IMR-90 (cell line): ENCODE measurements at regions of chr10 and their contacts with region 1.

Region 1: DNA sequence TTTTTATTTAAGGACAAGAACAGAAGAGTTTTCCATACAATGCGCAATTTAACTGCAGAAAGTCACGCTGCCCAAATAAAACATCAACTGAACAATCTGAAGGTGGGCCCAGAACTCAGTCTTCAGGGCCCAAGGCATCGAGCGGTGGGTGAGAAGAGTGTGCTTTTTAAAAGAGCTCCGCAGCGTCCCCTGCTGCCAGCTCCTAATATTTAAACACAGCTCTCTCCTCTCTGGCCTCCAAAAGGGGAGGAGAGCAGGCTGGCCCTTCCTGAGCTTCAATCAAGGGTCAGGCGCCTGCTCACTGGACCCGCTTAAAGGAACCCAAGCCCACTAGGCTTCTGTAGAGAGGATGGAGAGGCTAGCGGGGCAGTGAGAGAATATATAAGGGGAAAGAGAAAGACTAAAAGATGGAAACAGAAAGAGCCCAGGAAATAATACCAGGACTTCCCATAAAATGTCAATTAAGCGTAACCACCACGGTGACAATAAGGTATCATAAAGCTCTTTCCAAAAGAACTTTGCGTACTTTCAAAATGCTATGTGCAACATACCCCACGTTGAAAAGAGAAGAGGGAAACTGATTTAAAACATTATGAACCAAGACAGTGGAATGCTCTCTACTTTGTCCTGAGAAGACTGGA is 2.8 kb downstream of the FAM53B start:
- DNase-seq: peak; percentile 64
- ATAC-seq: peak; percentile 28
- H3K4me3 ChIP-seq: no peak overlapping the region
- H3K27ac ChIP-seq: no peak overlapping the region
- H3K4me1 ChIP-seq: peaks cover 18% of the 10 kb centered on the region
- H3K27me3 ChIP-seq: no peaks in the 10 kb centered on the region
- CTCF ChIP-seq: peak; percentile 82
- POLR2A ChIP-seq: no peak
- RAD21 ChIP-seq: peak; percentile 76

Region 2: GRCh38 chr10:124418726-124419501 is 322.5 kb before region 1 on chr10 and contains the start of gene OAT:
- CTCF ChIA-PET with region 1: no interaction called
- POLR2A ChIA-PET with region 1: no interaction called
- dilution Hi-C with region 1: no loop called
- in situ Hi-C with region 1: no loop called
- intact Hi-C with region 1: loop called (anchors 1 kb)
- DNase-seq: peak; percentile 92
- ATAC-seq: peak; percentile 96
- H3K4me3 ChIP-seq: peak within 1 kb of the TSS; percentile 67
- H3K27ac ChIP-seq: peak within 1 kb of the TSS; percentile 63
- H3K4me1 ChIP-seq: no peaks in the 10 kb centered on the region
- H3K27me3 ChIP-seq: peaks cover 10% of the 10 kb centered on the region; the same call in 1 of the 2 replicates
- CTCF ChIP-seq: 0 out of 2 replicates have a peak, but pooled peaks have one; percentile 1
- POLR2A ChIP-seq: peak; percentile 99
- RAD21 ChIP-seq: no peak
- total RNA-seq, gene OAT: 152 and 190 TPM in 2 replicates

Region 3: GRCh38 chr10:124539935-124540641 is 201.3 kb before region 1 on chr10:
- CTCF ChIA-PET with region 1: interaction called, 9 read pairs
- POLR2A ChIA-PET with region 1: no interaction called
- dilution Hi-C with region 1: no loop called
- in situ Hi-C with region 1: loop called (anchors 5 kb)
- intact Hi-C with region 1: loop called (anchors 1 kb)
- DNase-seq: peak; percentile 18
- ATAC-seq: peak; percentile 91
- H3K4me3 ChIP-seq: no peak overlapping the region
- H3K27ac ChIP-seq: no peak overlapping the region
- H3K4me1 ChIP-seq: no peaks in the 10 kb centered on the region
- H3K27me3 ChIP-seq: no peaks in the 10 kb centered on the region; the same call in 1 of the 2 replicates
- CTCF ChIP-seq: peak; percentile 57
- POLR2A ChIP-seq: no peak
- RAD21 ChIP-seq: peak; percentile 78

Region 4: GRCh38 chr10:124562425-124563060 is 178.9 kb before region 1 on chr10:
- CTCF ChIA-PET with region 1: no interaction called
- POLR2A ChIA-PET with region 1: no interaction called
- dilution Hi-C with region 1: no loop called
- in situ Hi-C with region 1: no loop called
- intact Hi-C with region 1: no loop called
- DNase-seq: no peak
- ATAC-seq: no peak
- H3K4me3 ChIP-seq: no peak overlapping the region
- H3K27ac ChIP-seq: no peak overlapping the region
- H3K4me1 ChIP-seq: no peaks in the 10 kb centered on the region
- H3K27me3 ChIP-seq: peaks cover 14% of the 10 kb centered on the region
- CTCF ChIP-seq: no peak
- POLR2A ChIP-seq: no peak
- RAD21 ChIP-seq: no peak

Region 5: GRCh38 chr10:124588736-124589490 is 152.5 kb before region 1 on chr10:
- CTCF ChIA-PET with region 1: no interaction called
- POLR2A ChIA-PET with region 1: no interaction called
- dilution Hi-C with region 1: no loop called
- in situ Hi-C with region 1: no loop called
- intact Hi-C with region 1: no loop called
- DNase-seq: peak; percentile 28
- ATAC-seq: peak; percentile 44
- H3K4me3 ChIP-seq: no peak overlapping the region
- H3K27ac ChIP-seq: no peak overlapping the region
- H3K4me1 ChIP-seq: no peaks in the 10 kb centered on the region
- H3K27me3 ChIP-seq: peaks cover 5% of the 10 kb centered on the region; the same call in 1 of the 2 replicates
- CTCF ChIP-seq: no peak
- POLR2A ChIP-seq: no peak
- RAD21 ChIP-seq: no peak

Region 6: GRCh38 chr10:124647421-124648130 is 93.8 kb before region 1 on chr10:
- CTCF ChIA-PET with region 1: interaction called, 4 read pairs
- POLR2A ChIA-PET with region 1: no interaction called
- dilution Hi-C with region 1: no loop called
- in situ Hi-C with region 1: no loop called
- intact Hi-C with region 1: loop called (anchors 5 kb)
- DNase-seq: peak; percentile 20
- ATAC-seq: peak; percentile 13
- H3K4me3 ChIP-seq: no peak overlapping the region
- H3K27ac ChIP-seq: no peak overlapping the region
- H3K4me1 ChIP-seq: peaks cover 27% of the 10 kb centered on the region
- H3K27me3 ChIP-seq: no peaks in the 10 kb centered on the region
- CTCF ChIP-seq: no peak
- POLR2A ChIP-seq: no peak
- RAD21 ChIP-seq: no peak

Region 7: GRCh38 chr10:124763267-124763666 is 21.9 kb after region 1 on chr10:
- CTCF ChIA-PET with region 1: interaction called, 11 read pairs
- POLR2A ChIA-PET with region 1: no interaction called
- dilution Hi-C with region 1: no loop called
- in situ Hi-C with region 1: no loop called
- intact Hi-C with region 1: no loop called
- DNase-seq: peak; percentile 48
- ATAC-seq: peak; percentile 44
- H3K4me3 ChIP-seq: no peak overlapping the region
- H3K27ac ChIP-seq: no peak overlapping the region
- H3K4me1 ChIP-seq: peaks cover 2% of the 10 kb centered on the region
- H3K27me3 ChIP-seq: no peaks in the 10 kb centered on the region
- CTCF ChIP-seq: no peak
- POLR2A ChIP-seq: no peak
- RAD21 ChIP-seq: no peak

Region 8: GRCh38 chr10:124916585-124917427 is 175.4 kb after region 1 on chr10:
- CTCF ChIA-PET with region 1: no interaction called
- POLR2A ChIA-PET with region 1: no interaction called
- dilution Hi-C with region 1: no loop called
- in situ Hi-C with region 1: no loop called
- intact Hi-C with region 1: loop called (anchors 5 kb)
- DNase-seq: peak; percentile 94
- ATAC-seq: peak; percentile 92
- H3K4me3 ChIP-seq: peak overlapping the region; percentile 75
- H3K27ac ChIP-seq: peak overlapping the region; percentile 96
- H3K4me1 ChIP-seq: peaks cover 10% of the 10 kb centered on the region
- H3K27me3 ChIP-seq: no peaks in the 10 kb centered on the region
- CTCF ChIP-seq: no peak
- POLR2A ChIP-seq: peak; percentile 92
- RAD21 ChIP-seq: no peak